Panc1 (cell line): ENCODE measurements at regions of chr2 and their contacts with region 1.

Region 1: DNA sequence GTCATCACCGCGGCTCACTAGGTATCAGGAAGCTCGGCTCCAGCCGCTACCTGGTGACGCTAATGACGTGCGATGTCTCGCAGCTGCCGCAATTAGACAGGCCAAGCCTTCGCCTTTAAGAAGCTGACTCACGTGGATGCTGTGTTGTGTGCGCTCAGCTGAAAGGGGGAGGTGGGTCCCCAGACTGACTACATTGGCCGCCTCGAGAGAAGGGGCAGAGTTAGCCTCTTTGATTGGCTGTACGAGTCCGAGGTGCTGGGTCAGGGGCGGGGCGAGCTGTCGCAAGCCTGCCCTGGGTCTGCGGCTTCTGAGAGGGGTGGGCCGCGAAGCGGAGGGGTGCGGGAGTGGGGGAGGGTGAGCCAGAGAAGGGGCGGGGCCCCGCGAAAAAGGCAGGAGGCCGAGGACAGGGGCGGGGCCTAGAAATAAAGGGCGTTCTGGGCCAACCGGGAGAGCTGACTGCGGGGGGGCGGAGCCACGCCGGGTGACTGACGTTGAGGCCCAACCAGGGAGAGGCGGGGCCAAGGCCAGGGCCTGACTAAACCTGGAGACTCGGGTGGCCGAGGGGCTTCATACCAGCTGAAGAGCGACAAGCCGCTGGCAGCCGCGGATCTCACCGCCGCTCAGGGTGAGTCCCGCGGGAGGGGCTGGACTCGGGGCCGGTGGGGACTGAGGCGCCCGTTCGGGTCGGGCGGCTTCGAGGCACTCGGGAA is at the start of gene YPEL5:
- DNase-seq: peak; percentile 95
- ATAC-seq: peak; percentile 98
- H3K4me3 ChIP-seq: peak within 1 kb of the TSS; percentile 75 to 83
- H3K27ac ChIP-seq: peak within 1 kb of the TSS; percentile 78
- H3K4me1 ChIP-seq: peaks cover 28% of the 10 kb centered on the region
- H3K27me3 ChIP-seq: no peaks in the 10 kb centered on the region; the same call in 1 of the 2 replicates
- CTCF ChIP-seq: no peak
- total RNA-seq, gene YPEL5: 66.4 TPM

Region 2: DNA sequence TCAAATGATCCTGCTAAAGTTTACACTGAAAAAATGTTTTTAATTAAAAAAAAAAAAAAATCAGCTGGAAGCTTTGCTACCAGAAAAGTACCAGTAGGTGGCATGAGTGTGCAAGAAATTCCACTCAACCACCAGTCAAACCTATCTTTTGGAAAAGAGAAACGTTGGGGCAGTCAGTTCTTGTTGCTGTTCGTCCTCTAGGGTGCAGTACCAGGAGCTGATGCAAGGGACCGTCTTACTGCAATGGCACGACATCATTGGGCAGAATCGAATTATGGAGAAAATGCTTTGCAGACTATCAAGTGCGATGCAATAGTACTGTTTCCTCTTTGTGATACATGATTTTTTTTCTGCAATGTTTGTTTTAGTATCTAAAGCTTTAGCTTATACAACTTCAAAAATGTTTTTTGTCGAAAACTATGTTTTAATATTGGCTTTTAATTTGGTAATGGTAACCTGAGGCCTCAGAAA is 18.5 kb after region 1 on chr2:
- CTCF ChIA-PET with region 1: interaction called, 18 read pairs
- POLR2A ChIA-PET with region 1: interaction called, 7 read pairs
- in situ Hi-C with region 1: no loop called
- intact Hi-C with region 1: no loop called
- DNase-seq: peak; percentile 69
- ATAC-seq: peak; percentile 99
- H3K4me3 ChIP-seq: no peak overlapping the region
- H3K27ac ChIP-seq: no peak overlapping the region
- H3K4me1 ChIP-seq: no peaks in the 10 kb centered on the region
- H3K27me3 ChIP-seq: no peaks in the 10 kb centered on the region
- CTCF ChIP-seq: peak; percentile 92

Region 3: DNA sequence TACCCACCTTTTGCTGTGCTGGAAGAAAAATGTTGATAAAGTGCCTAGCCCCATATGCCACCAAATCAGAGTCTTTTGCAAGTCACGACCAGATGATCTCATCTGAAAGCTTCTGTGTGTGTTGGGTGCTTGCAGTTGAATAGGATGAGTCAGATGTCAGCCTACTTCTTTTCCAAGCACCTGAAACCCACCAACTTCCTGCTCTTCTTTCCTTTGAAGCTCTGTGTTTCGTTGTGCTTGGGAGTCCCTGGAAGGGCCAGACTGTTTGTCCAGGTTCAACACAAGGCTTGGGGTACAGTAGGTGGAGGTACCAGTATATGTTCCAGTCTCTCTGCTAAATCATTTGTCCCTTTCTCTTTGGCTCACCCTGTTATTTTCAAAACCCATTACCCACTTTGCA is 263.6 kb after region 1 on chr2:
- CTCF ChIA-PET with region 1: no interaction called
- POLR2A ChIA-PET with region 1: no interaction called
- in situ Hi-C with region 1: no loop called
- intact Hi-C with region 1: no loop called
- DNase-seq: no peak
- ATAC-seq: no peak
- H3K4me3 ChIP-seq: no peak overlapping the region
- H3K27ac ChIP-seq: no peak overlapping the region
- H3K4me1 ChIP-seq: no peaks in the 10 kb centered on the region
- H3K27me3 ChIP-seq: no peaks in the 10 kb centered on the region; the same call in 1 of the 2 replicates
- CTCF ChIP-seq: no peak

Region 4: DNA sequence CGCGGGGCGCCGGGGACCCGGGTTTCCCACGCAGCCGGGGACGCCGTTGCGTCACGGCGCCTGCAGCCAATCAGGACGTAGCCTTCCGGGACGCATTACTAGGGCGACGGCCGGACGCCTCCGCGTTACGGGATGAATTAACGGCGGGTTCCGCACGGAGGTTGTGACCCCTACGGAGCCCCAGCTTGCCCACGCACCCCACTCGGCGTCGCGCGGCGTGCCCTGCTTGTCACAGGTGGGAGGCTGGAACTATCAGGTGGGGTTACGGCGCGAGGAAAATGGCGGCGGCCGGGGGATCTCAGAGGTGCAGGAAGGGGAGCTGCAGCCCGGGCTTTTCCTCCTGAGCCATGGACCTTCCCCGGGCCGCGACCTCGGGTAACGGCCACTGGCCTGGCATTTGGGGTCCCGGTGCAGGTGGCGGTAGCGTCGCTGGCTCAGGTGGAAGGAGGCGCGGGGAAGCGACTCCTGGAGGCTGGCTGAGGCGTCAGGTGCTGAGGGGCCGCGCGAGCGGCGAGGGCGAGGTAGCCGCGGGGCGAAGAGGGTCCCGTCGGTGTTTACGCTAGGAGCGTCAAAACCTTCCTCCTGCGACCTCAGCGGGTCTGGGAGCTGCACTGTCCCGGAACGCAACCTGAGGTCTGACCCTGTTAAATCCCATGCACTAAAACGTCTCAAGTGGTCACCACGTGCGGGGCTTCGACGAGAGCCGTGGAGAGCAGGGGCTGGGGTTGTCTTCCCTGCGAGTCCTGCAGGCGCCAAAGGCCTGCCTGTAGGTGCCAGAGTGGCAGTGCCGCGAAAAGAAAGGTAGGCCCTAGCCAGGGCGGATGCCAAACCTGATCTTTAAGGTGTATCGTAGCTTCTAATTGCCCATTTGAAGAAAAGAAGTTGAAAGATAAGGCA is 300.8 kb after region 1 on chr2 and contains the start of gene LCLAT1:
- CTCF ChIA-PET with region 1: interaction called, 12 read pairs
- POLR2A ChIA-PET with region 1: no interaction called
- in situ Hi-C with region 1: no loop called
- intact Hi-C with region 1: no loop called
- DNase-seq: peak; percentile 36
- ATAC-seq: peak; percentile 97
- H3K4me3 ChIP-seq: peak within 1 kb of the TSS; percentile 85 to 92
- H3K27ac ChIP-seq: peak within 1 kb of the TSS; percentile 93
- H3K4me1 ChIP-seq: peaks cover 8% of the 10 kb centered on the region
- H3K27me3 ChIP-seq: no peaks in the 10 kb centered on the region
- CTCF ChIP-seq: no peak
- total RNA-seq, gene LCLAT1: 36.0 TPM